GM12878 (cell line): ENCODE measurements at regions of chr20 and their contacts with region 1.

Region 1: DNA sequence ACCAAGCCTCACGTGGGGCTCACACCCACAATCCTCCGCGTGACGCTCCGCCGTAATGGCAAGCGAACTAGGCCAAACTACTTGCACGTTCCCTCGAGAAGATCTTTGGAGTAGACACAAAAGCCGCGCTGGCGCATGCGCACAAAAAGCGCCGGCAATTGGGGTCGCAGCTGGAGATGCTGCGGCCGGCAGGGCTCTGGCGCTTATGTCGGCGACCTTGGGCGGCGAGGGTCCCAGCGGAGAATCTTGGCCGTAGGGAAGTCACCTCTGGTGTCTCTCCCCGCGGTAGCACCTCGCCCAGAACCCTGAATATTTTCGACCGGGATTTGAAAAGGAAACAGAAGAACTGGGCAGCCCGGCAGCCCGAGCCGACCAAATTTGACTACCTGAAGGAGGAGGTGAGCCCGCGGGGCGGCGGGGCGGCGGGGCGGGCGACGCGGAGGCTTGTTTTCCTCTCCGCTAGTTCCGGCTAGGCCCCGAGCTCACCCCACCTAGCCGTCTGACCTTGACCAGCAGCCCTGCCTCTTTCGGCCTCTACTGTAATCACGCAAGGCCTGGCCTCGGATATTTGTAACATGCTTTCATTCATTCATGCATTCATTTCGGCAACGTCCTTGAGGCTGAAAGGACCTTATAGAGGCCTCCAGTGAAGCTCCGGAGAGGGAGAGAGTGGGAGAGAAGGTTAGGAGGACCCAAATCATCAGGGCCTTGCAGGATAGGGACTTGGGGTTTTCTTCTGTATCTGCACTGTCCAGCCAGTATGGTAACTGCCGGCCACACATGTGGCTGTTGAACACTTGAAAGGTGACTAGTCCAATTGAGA is at the starts of genes ESF1 and NDUFAF5:
- DNase-seq: peak; percentile 95
- ATAC-seq: peak; percentile 93
- H3K4me3 ChIP-seq: peak within 1 kb of the TSS; percentile 99
- H3K27ac ChIP-seq: peak within 1 kb of the TSS; percentile 80
- H3K4me1 ChIP-seq: peaks cover 5% of the 10 kb centered on the region
- H3K27me3 ChIP-seq: no peaks in the 10 kb centered on the region
- CTCF ChIP-seq: no peak
- EP300 ChIP-seq: no peak
- POLR2A ChIP-seq: peak; percentile 40
- RAD21 ChIP-seq: no peak
- polyA plus RNA-seq, gene ESF1: 20.2 to 27.6 TPM
- polyA plus RNA-seq, gene NDUFAF5: 24.7 to 27.5 TPM

Region 2: DNA sequence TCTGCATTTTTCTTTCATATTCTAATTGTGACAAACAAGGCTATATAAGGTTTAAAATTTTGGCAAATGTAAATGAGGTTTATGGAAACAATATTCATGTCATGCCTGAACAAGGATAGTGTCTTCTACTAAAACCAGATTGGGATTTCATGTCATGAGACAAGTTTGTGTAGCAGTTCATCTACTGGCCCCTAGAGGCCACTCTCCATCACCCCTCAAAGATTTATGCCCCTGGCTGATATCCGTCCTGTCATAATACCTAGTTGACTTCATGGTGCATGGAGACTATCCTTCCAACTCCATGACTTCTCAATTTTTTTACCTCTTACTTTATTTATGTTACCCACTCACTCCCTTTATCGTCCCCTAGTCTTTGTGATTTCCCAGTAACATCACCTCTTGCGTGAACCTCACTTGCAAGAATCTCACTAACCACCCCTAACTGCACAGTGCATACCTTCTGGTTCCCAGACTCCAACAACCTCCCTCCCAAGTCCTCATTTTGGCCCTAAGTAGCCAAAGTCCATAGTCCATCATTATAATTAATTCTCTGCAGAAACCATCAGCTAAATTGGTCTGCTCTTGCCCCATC is 326.1 kb before region 1 on chr20:
- CTCF ChIA-PET with region 1: interaction called, 22 read pairs
- POLR2A ChIA-PET with region 1: no interaction called
- RAD21 ChIA-PET with region 1: interaction called, 5 read pairs
- SMC1A ChIA-PET with region 1: interaction called, 14 read pairs
- in situ Hi-C with region 1: loop called (anchors 25 kb)
- intact Hi-C with region 1: loop called (anchors 1 kb)
- DNase-seq: no peak
- ATAC-seq: peak; percentile 91
- H3K4me3 ChIP-seq: no peak overlapping the region
- H3K27ac ChIP-seq: no peak overlapping the region
- H3K4me1 ChIP-seq: no peaks in the 10 kb centered on the region
- H3K27me3 ChIP-seq: no peaks in the 10 kb centered on the region
- CTCF ChIP-seq: peak; percentile 72 to 89 (median 89)
- EP300 ChIP-seq: no peak
- POLR2A ChIP-seq: no peak
- RAD21 ChIP-seq: peak; percentile 74

Region 3: DNA sequence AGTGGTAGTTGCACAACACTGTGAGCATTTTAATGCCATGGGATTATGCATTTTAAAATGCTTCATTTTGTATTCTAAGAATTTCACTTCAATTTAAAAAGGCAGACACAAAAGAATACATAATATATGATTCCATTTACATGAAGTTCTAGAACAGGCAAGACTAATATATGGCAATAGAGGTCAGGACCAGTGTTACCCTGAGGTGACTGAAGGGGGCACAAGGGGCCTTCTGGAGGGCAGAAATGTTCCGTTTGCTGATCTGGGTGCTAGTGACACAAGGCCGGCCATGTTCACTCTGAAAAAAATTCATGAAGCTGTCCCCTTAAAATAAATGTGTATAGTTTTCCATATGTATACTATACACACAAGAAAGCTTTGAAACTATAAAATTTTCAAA is 174.9 kb before region 1 on chr20:
- CTCF ChIA-PET with region 1: interaction called, 40 read pairs
- POLR2A ChIA-PET with region 1: interaction called, 3 read pairs
- RAD21 ChIA-PET with region 1: interaction called, 18 read pairs
- SMC1A ChIA-PET with region 1: interaction called, 19 read pairs
- in situ Hi-C with region 1: no loop called
- intact Hi-C with region 1: loop called (anchors 1 kb)
- DNase-seq: no peak
- ATAC-seq: peak; percentile 89
- H3K4me3 ChIP-seq: no peak overlapping the region
- H3K27ac ChIP-seq: no peak overlapping the region
- H3K4me1 ChIP-seq: no peaks in the 10 kb centered on the region
- H3K27me3 ChIP-seq: no peaks in the 10 kb centered on the region
- CTCF ChIP-seq: peak; percentile 36 to 59 (median 41); a peak in 3 of 6 replicates
- EP300 ChIP-seq: no peak
- POLR2A ChIP-seq: no peak
- RAD21 ChIP-seq: peak; percentile 57

Region 4: GRCh38 chr20:13638496-13639222 is 146.4 kb before region 1 on chr20 and contains the start of gene TASP1:
- CTCF ChIA-PET with region 1: interaction called, 6 read pairs
- POLR2A ChIA-PET with region 1: no interaction called
- RAD21 ChIA-PET with region 1: interaction called, 3 read pairs
- SMC1A ChIA-PET with region 1: no interaction called
- in situ Hi-C with region 1: no loop called
- intact Hi-C with region 1: loop called (anchors 5 kb)
- DNase-seq: peak; percentile 84
- ATAC-seq: peak; percentile 100
- H3K4me3 ChIP-seq: peak within 1 kb of the TSS; percentile 90
- H3K27ac ChIP-seq: no peak within 1 kb of the TSS; the same call in 1 of the 2 replicates
- H3K4me1 ChIP-seq: no peaks in the 10 kb centered on the region
- H3K27me3 ChIP-seq: no peaks in the 10 kb centered on the region
- CTCF ChIP-seq: no peak
- EP300 ChIP-seq: no peak
- POLR2A ChIP-seq: peak; percentile 93
- RAD21 ChIP-seq: no peak
- polyA plus RNA-seq, gene TASP1: 12.3 to 17.8 TPM

Region 5: DNA sequence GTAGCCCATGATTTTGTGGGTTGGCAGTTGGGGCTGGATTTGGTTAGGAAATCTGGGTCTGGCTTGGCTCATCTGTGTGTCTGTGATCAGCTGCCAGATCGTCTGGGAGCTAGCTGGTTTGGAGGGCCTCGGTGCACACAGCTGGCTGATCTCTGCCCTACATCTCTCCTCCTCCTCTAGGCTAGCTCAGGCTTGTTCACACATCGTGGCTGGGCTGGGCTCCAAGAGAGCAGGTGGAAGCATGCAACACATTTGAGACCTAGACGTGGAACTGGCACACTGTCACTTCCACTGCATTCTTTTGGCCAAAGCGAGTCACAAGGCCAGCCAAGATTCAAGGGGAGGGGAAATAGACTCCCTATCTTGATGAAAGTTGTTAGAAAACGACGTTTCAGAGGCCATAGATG is 15.6 kb after region 1 on chr20:
- CTCF ChIA-PET with region 1: interaction called, 16 read pairs
- POLR2A ChIA-PET with region 1: interaction called, 3 read pairs
- RAD21 ChIA-PET with region 1: interaction called, 4 read pairs
- SMC1A ChIA-PET with region 1: interaction called, 7 read pairs
- in situ Hi-C with region 1: no loop called
- intact Hi-C with region 1: no loop called
- DNase-seq: no peak
- ATAC-seq: no peak
- H3K4me3 ChIP-seq: no peak overlapping the region
- H3K27ac ChIP-seq: no peak overlapping the region
- H3K4me1 ChIP-seq: no peaks in the 10 kb centered on the region
- H3K27me3 ChIP-seq: no peaks in the 10 kb centered on the region
- CTCF ChIP-seq: no peak
- EP300 ChIP-seq: no peak
- POLR2A ChIP-seq: no peak
- RAD21 ChIP-seq: no peak

Region 6: GRCh38 chr20:13819885-13820645 is 35.0 kb after region 1 on chr20:
- CTCF ChIA-PET with region 1: interaction called, 16 read pairs
- POLR2A ChIA-PET with region 1: no interaction called
- RAD21 ChIA-PET with region 1: interaction called, 3 read pairs
- SMC1A ChIA-PET with region 1: interaction called, 4 read pairs
- in situ Hi-C with region 1: no loop called
- intact Hi-C with region 1: no loop called
- DNase-seq: no peak
- ATAC-seq: peak; percentile 92
- H3K4me3 ChIP-seq: no peak overlapping the region
- H3K27ac ChIP-seq: no peak overlapping the region
- H3K4me1 ChIP-seq: no peaks in the 10 kb centered on the region; the same call in 1 of the 2 replicates
- H3K27me3 ChIP-seq: no peaks in the 10 kb centered on the region
- CTCF ChIP-seq: peak; percentile 52 to 57 (median 56)
- EP300 ChIP-seq: no peak
- POLR2A ChIP-seq: no peak
- RAD21 ChIP-seq: peak; percentile 47